Activated CD4-positive, alpha-beta T cell treated with anti-CD3 and anti-CD28 coated beads for 36 hours (primary cell): ENCODE measurements at regions of chr14 and their contacts with region 1.

Region 1: DNA sequence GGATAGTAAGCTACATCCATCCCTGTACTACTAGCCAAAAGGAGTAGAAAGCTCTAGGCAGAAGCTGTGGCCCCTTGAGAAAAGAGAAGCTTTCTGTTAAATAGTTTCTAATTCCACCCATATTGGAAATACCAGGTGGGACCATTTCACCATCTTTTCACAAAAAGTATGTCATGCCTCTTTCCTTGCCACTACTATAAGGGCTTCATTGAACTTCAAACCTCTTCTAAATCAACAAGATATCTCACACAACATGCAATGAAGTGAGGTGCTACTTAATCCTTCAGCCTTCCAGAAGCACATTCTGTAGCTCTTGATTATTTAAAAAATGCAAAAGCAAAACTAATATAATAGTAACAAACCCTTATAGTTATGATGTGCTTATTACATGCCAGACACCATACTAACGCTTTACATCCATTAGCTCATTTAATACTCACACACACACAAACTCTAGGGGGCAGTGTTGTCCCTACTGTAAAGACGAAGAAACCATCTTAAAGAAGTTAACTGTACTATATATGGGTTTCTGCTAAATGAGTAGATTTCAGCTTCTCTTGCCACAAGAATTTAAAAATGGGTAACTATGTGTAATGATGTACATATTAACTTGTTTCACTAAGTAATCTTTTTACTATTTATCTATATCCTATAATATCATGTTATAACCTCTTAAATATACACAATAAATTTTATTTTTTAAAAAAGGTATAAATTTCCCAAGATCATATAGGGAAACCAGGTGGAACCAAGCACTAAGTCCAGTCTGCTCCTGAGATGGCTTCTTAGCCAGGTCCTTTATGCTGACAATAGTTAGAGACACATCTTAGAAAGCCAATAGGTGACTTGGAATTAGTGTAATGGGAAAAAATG is 124.4 kb downstream of the RPS29 start:
- DNase-seq: peak; percentile 73
- ATAC-seq: peak; percentile 98
- H3K4me3 Mint-ChIP-seq: no peak overlapping the region
- H3K27ac Mint-ChIP-seq: no peak overlapping the region
- H3K4me1 Mint-ChIP-seq: no peaks in the 10 kb centered on the region
- H3K27me3 Mint-ChIP-seq: no peaks in the 10 kb centered on the region

Region 2: DNA sequence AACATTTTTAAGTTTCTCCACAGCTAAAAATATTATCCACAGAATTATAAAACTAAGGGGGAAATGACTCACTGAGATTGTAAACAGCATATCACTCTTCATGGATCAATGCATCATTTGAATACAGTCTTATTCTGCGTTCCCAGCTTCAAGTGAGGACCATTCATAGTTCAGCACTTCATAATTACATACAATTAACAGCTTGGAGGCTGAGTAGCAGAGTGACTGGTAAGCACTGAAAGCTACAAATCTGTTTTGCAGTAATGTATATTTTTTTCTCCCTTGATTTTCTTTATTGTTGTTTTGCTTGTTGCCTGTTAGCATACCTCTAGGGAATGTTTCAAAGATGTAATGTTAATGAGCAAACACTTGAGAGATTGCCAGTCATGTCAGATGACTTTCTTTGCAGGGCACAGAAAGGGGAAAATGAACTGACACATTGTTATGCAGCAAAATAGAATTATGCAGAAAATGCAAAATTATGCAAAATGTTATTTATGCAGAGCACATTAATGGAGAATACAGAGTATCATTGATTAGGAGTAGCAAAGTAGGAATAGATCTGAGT is 14.1 kb before region 1 on chr14:
- CTCF ChIA-PET with region 1: interaction called, 32 read pairs
- POLR2A ChIA-PET with region 1: no interaction called
- intact Hi-C with region 1: no loop called
- DNase-seq: no peak
- ATAC-seq: no peak
- H3K4me3 Mint-ChIP-seq: no peak overlapping the region
- H3K27ac Mint-ChIP-seq: no peak overlapping the region
- H3K4me1 Mint-ChIP-seq: no peaks in the 10 kb centered on the region
- H3K27me3 Mint-ChIP-seq: peaks cover 6% of the 10 kb centered on the region

Region 3: GRCh38 chr14:49497725-49498348 is 36.1 kb after region 1 on chr14:
- CTCF ChIA-PET with region 1: interaction called, 143 read pairs
- POLR2A ChIA-PET with region 1: no interaction called
- intact Hi-C with region 1: loop called (anchors 1 kb)
- DNase-seq: peak; percentile 30
- ATAC-seq: peak; percentile 71
- H3K4me3 Mint-ChIP-seq: no peak overlapping the region
- H3K27ac Mint-ChIP-seq: no peak overlapping the region
- H3K4me1 Mint-ChIP-seq: no peaks in the 10 kb centered on the region
- H3K27me3 Mint-ChIP-seq: peaks cover 9% of the 10 kb centered on the region

Region 4: GRCh38 chr14:49620182-49621113 is 158.7 kb after region 1 on chr14 and contains the starts of genes MGAT2 and RPL36AL:
- CTCF ChIA-PET with region 1: interaction called, 3 read pairs
- POLR2A ChIA-PET with region 1: interaction called, 3 read pairs
- intact Hi-C with region 1: loop called in 1 of 2 experiments (anchors 5 kb)
- DNase-seq: peak; percentile 97
- ATAC-seq: peak; percentile 90
- H3K4me3 Mint-ChIP-seq: peak within 1 kb of the TSS; percentile 93
- H3K27ac Mint-ChIP-seq: peak within 1 kb of the TSS; percentile 97
- H3K4me1 Mint-ChIP-seq: peaks cover 51% of the 10 kb centered on the region
- H3K27me3 Mint-ChIP-seq: no peaks in the 10 kb centered on the region
- total RNA-seq, gene MGAT2: 23.8 to 32.2 TPM
- total RNA-seq, gene RPL36AL: 272 to 309 TPM